ENCODE measurements at regions of chr17 and their contacts with region 1.

Region 1: GRCh38 chr17:82668631-82669099 is 20.4 kb upstream of the WDR45B start:
- DNase-seq: peak; percentile 55
- ATAC-seq: peak; percentile 94
- H3K4me3 Mint-ChIP-seq: no peak overlapping the region
- H3K27ac Mint-ChIP-seq: no peak overlapping the region
- H3K4me1 Mint-ChIP-seq: peaks cover 6% of the 10 kb centered on the region
- H3K27me3 Mint-ChIP-seq: no peaks in the 10 kb centered on the region

Region 2: GRCh38 chr17:82475458-82475857 is 193.2 kb before region 1 on chr17:
- CTCF ChIA-PET with region 1: no interaction called
- DNase-seq: no peak
- ATAC-seq: no peak
- H3K4me3 Mint-ChIP-seq: no peak overlapping the region
- H3K27ac Mint-ChIP-seq: no peak overlapping the region
- H3K4me1 Mint-ChIP-seq: peaks cover 28% of the 10 kb centered on the region
- H3K27me3 Mint-ChIP-seq: no peaks in the 10 kb centered on the region

Region 3: DNA sequence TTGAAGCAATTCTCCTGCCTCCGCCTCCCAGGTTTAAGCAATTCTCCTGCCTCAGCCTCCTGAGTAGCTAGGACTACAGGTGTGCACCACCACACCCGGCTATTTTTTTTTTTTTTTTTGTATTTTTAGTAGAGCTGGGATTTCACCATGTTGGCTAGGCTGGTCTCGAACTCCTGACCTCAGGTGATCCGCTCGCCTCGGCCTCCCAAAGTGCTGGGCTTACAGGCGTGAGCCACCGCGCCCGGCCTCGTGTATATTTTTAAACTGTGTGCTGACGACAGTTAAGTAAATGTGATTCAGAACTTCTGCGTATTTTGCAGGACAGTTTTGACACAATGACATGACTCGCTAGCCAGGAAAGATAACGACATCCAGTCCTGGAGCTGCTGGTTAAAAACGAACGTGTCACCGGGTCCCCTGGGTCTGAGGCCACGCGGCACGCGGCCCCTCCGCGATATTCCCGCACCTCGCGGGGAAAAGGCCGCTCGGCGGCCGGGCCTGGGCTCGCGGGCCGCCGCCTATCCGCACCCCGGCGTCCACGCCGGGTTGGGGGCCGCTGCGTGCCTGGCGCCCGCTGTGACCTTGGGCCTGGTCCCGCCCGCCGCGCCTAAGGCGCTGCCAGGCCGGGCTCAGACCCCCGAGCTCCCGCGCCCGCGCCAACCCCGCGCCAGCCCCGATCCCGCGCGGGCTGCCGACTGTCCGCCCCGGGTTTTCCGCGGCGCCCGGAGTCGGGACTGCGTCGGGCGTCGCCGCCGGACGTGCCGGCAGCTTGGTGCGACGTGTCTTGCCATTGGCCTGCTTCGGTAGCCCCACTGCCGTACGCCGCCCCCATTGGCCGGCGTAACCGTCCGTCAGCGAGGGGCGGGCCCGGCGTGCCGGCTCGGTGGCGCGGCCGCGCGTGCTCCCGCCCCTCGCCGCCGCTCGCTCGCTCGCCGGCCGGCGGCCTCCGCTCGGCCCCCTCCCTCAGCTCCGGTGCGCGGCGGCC is 149.5 kb before region 1 on chr17 and contains the start of gene FOXK2:
- CTCF ChIA-PET with region 1: no interaction called
- DNase-seq: peak; percentile 95
- ATAC-seq: peak; percentile 98
- H3K4me3 Mint-ChIP-seq: peak within 1 kb of the TSS; percentile 91
- H3K27ac Mint-ChIP-seq: peak within 1 kb of the TSS; percentile 86
- H3K4me1 Mint-ChIP-seq: peaks cover 23% of the 10 kb centered on the region
- H3K27me3 Mint-ChIP-seq: no peaks in the 10 kb centered on the region
- total RNA-seq, gene FOXK2: 81.7 to 85.1 TPM

Region 4: DNA sequence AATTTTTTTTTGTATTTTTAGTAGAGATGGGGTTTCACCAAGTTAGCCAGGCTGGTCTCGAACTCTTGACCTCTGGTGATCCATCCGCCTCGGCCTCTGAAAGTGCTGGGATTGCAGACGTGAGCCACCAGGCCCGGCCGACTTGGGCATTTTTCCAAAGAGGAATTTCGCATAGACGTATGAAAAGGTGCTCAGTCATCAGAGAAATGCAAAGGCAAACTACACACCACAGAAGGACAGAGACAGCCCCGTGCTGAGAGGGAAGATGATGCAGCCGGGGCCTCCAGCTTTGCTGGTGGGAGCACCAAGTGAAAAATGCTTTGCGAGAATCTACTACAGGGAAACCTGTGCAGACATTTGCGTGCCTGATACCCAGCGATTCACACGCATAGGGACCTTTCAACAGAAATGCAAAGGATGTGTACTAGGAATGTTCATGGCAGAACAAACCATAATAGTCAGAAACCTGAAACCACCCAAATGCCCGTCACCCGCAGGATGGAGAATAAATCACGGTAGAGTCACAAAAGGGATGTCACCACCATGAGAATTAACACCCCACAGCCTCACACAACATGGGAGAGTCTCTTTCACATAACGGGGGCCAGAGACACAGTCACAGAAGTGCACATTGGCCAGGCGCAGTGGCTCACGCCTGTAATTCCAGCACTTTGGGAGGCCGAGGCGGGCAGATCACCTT is 24.7 kb after region 1 on chr17:
- CTCF ChIA-PET with region 1: no interaction called
- DNase-seq: no peak
- ATAC-seq: no peak
- H3K4me3 Mint-ChIP-seq: no peak overlapping the region
- H3K27ac Mint-ChIP-seq: no peak overlapping the region
- H3K4me1 Mint-ChIP-seq: peaks cover 3% of the 10 kb centered on the region
- H3K27me3 Mint-ChIP-seq: peaks cover 8% of the 10 kb centered on the region

Region 5: DNA sequence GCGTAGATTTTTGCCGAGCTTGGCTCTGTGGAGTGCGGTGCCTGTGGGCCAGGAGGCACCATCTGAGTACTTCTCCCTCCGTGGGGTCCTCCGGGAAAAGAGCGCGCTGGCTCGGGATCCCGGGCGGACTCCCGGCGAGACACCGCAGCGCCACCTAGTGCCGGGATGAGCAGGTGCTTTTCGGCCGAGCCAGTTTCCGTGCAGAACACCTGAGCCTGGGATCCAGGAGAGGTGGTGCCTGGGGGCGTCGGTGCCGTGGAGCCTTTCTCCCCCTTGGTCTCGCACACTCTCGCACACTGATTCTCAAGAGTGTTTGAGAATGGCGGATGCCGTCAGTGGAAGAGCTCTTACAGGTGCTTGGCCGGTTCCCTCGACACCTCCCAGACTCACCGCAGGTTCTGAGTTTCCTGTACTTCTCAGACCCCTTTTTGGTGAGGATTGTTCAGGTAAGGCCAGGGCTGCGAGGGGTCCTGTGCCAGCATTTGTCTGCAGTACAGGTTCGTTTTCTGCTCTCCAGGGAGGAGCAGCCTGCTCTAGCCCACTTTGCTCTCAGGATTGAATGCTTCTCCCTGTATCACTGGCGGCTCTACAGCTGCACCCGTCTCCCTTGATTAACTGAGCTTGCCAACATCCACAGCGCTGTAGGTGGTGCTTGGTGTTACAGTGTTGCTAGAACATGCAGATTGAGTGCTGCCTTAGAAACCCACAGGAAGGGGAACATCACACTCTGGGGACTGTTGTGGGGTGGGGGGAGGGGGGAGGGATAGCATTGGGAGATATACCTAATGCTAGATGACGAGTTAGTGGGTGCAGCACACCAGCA is 106.5 kb after region 1 on chr17:
- CTCF ChIA-PET with region 1: interaction called, 10 read pairs
- DNase-seq: peak; percentile 64
- ATAC-seq: peak; percentile 78
- H3K4me3 Mint-ChIP-seq: peak overlapping the region; percentile 39
- H3K27ac Mint-ChIP-seq: peak overlapping the region; percentile 82
- H3K4me1 Mint-ChIP-seq: peaks cover 31% of the 10 kb centered on the region
- H3K27me3 Mint-ChIP-seq: no peaks in the 10 kb centered on the region

Region 6: GRCh38 chr17:82808921-82809905 is 140.5 kb after region 1 on chr17:
- CTCF ChIA-PET with region 1: no interaction called
- DNase-seq: no peak
- ATAC-seq: no peak
- H3K4me3 Mint-ChIP-seq: no peak overlapping the region
- H3K27ac Mint-ChIP-seq: no peak overlapping the region
- H3K4me1 Mint-ChIP-seq: no peaks in the 10 kb centered on the region
- H3K27me3 Mint-ChIP-seq: no peaks in the 10 kb centered on the region